CD4-positive, alpha-beta T cell (primary cell): ENCODE measurements at regions of chr9 and their contacts with region 1.

Region 1: DNA sequence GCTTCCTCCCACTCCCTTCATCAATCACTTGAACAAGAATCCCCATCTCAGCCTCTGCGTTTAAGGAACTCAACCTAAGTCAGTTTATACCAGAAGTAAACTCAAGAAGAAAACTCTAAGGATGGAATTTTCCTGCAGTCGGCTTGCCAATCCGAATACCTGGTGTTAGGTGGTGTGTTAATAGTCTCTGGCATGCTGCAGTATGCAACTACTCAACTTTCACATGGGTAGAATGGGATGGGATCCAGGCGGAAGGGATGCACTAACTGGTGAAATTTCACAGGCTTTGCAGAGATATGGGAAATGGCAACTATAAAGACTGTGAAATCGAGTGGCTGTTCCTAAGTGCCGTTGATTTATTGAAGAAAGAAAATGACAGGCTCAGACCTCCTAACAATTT is 560.6 kb downstream of the TLE1 start:
- DNase-seq: no peak
- ATAC-seq: no peak
- H3K4me3 ChIP-seq: no peak overlapping the region
- H3K4me3 Mint-ChIP-seq: no peak overlapping the region
- H3K27ac ChIP-seq: no peak overlapping the region
- H3K27ac Mint-ChIP-seq: no peak overlapping the region
- H3K4me1 ChIP-seq: no peaks in the 10 kb centered on the region
- H3K4me1 Mint-ChIP-seq: no peaks in the 10 kb centered on the region
- H3K27me3 ChIP-seq: no peaks in the 10 kb centered on the region
- H3K27me3 Mint-ChIP-seq: no peaks in the 10 kb centered on the region
- CTCF ChIP-seq: no peak

Region 2: GRCh38 chr9:81083067-81083466 is 45.6 kb before region 1 on chr9:
- CTCF ChIA-PET with region 1: no interaction called
- POLR2A ChIA-PET with region 1: no interaction called
- intact Hi-C with region 1: no loop called
- DNase-seq: no peak
- ATAC-seq: no peak
- H3K4me3 ChIP-seq: no peak overlapping the region
- H3K4me3 Mint-ChIP-seq: no peak overlapping the region
- H3K27ac ChIP-seq: no peak overlapping the region
- H3K27ac Mint-ChIP-seq: no peak overlapping the region
- H3K4me1 ChIP-seq: no peaks in the 10 kb centered on the region
- H3K4me1 Mint-ChIP-seq: no peaks in the 10 kb centered on the region
- H3K27me3 ChIP-seq: no peaks in the 10 kb centered on the region
- H3K27me3 Mint-ChIP-seq: no peaks in the 10 kb centered on the region
- CTCF ChIP-seq: no peak

Region 3: DNA sequence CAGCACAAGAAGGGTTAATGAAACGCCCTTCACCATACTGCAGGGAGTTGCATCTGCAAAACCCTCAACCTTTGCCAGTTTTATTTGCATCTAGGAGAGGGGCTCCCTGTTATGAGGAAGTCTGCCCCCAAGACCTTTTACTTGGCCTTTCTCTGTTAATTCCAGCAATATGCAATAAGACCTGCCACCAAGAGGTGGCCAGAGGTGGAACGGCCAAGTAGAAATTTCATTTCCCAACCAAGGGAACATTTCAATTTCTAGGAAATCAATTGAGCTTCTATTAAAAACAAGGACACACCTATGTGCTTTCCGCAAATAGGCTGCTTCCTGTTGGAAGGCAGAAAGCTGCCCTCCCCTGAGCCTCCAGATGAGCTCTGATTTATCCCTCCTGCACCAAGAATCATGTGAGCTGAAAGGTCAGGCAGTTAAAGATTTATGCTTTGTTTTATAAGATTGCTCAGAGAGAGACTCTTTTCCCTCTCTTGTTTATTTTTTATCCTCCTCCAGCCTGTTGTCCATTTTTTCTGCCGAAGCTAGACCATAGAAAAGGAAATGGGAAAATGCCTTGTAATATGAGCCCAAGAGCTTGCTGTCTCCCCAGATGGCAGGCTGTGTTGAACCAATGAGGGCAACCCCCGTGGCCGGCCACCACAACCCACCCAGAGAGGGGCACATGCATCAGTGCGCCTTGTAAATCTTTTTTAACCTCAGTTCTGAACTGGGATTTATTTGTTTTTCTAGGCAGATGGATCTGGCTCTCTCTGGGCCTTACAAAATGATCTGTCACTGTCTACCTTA is 12.2 kb before region 1 on chr9:
- CTCF ChIA-PET with region 1: no interaction called
- POLR2A ChIA-PET with region 1: no interaction called
- intact Hi-C with region 1: loop called in 1 of 2 experiments (anchors 1 kb)
- DNase-seq: no peak
- ATAC-seq: no peak
- H3K4me3 ChIP-seq: no peak overlapping the region
- H3K4me3 Mint-ChIP-seq: no peak overlapping the region
- H3K27ac ChIP-seq: no peak overlapping the region
- H3K27ac Mint-ChIP-seq: no peak overlapping the region
- H3K4me1 ChIP-seq: no peaks in the 10 kb centered on the region
- H3K4me1 Mint-ChIP-seq: peaks cover 15% of the 10 kb centered on the region
- H3K27me3 ChIP-seq: peaks cover 0 to 3% of the 10 kb centered on the region in 2 experiments
- H3K27me3 Mint-ChIP-seq: peaks cover 11% of the 10 kb centered on the region
- CTCF ChIP-seq: no peak